Breast epithelium (tissue), 4 donors: ENCODE measurements at regions of chr5 and their contacts with region 1.

Region 1: DNA sequence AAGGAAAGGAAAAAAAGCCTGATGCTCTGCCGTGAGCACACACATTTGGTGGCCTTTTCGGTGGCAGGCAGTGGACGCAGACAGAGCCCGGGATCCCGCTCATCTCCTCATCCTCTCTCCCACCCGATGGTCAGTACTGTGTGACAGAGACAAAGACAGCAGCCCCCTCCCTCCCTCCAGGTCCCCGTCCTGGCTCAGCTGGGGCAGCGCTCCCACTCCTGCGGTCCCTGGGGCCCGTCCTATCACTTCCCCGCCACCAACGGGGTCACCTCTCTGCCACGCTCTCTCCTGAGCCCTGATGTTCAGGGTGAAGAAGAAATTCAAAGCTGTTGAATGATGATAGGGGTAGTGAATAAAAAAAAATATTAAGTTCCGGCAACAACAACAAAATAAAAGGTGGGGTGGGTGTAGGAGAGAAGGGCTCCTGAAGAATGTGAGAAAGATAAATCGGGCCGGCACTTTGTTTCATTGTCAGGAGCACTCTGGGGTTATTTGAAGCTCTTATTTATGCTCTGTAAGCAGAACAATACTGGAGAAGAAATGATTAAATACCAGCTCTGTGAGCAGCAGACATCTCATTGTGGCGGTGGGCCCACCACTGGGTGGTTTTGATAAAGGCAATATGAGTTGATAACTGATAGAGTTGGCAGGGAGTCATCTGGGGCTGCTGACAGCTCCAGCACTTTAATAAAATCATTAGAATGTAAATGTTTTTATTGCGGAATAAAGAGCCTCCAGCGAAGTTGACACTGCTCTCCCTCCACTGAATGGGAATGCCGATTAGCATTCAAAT is 417.7 kb downstream of the IRX1 start:
- DNase-seq: no peak
- H3K4me3 ChIP-seq: no peak overlapping the region
- H3K27ac ChIP-seq: no peak overlapping the region
- H3K4me1 ChIP-seq: no peaks in the 10 kb centered on the region
- H3K27me3 ChIP-seq: no peaks in the 10 kb centered on the region
- CTCF ChIP-seq: no peak
- POLR2A ChIP-seq: no peak

Region 2: DNA sequence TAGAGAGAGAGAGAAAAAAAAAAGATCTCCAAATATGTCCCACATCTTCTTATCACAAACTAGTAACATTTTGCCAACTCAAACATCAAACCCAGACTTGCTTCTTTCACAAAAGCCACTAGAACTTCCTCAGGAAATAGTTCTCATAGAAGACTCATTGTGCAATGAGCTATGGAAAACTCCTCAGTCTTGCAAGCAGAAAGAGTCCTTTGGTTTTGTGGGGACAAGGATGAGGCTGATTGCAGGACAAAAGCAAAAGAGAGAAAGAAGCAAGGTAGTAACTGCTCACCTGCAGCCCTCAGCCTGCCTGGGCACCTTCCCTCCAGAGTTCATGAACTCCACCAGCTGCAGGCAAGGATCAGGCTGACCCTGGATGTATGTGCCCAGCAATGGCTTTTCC is 18.7 kb before region 1 on chr5:
- intact Hi-C with region 1: no loop called
- DNase-seq: no peak
- H3K4me3 ChIP-seq: no peak overlapping the region
- H3K27ac ChIP-seq: no peak overlapping the region
- H3K4me1 ChIP-seq: no peaks in the 10 kb centered on the region
- H3K27me3 ChIP-seq: no peaks in the 10 kb centered on the region
- CTCF ChIP-seq: no peak
- POLR2A ChIP-seq: no peak

Region 3: DNA sequence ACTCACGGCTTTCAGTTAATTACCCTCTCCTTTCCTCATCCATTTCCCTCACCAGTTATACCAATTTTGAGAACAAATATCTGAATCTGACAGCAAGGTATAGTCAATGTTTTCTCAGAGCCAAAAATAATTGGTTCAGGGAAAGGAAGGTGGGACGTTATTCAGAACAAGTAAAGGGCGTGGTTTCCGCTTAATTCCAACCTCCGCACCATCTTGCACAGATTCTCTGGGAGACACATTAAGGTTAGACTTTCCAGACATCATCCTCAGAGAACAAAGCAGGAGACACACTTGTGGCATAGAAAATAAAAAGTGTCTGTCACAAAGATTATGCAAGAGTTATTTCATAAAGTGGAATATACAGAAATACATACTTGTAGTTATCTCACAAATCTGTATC is 23.6 kb after region 1 on chr5:
- intact Hi-C with region 1: no loop called
- DNase-seq: no peak
- H3K4me3 ChIP-seq: no peak overlapping the region
- H3K27ac ChIP-seq: no peak overlapping the region
- H3K4me1 ChIP-seq: no peaks in the 10 kb centered on the region
- H3K27me3 ChIP-seq: no peaks in the 10 kb centered on the region
- CTCF ChIP-seq: no peak
- POLR2A ChIP-seq: no peak

Region 4: DNA sequence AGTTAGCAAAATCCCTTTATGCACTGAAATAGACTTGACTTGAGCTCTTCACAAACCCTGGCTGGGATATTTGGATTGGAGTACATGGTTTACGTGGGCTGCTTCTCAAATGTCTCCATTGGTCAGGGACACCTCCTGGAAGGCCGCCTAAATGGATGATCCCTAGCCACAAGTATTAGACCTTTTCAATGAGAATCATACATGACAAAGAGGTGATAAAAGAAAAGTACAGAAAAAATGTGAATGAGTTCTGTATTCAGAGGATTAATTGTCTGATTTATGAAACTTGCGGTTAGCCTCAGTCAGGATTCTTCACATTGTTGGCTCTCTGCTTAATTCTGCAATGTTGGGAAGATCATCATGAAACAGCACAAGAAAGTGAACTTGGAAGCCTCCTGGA is 374.0 kb after region 1 on chr5:
- intact Hi-C with region 1: no loop called
- DNase-seq: peak in 1 of 2 donors; percentile 90
- H3K4me3 ChIP-seq: no peak overlapping the region
- H3K27ac ChIP-seq: peak overlapping the region in 1 of 2 donors; percentile 49
- H3K4me1 ChIP-seq: no peaks in the 10 kb centered on the region
- H3K27me3 ChIP-seq: no peaks in the 10 kb centered on the region
- CTCF ChIP-seq: no peak
- POLR2A ChIP-seq: no peak

Region 5: DNA sequence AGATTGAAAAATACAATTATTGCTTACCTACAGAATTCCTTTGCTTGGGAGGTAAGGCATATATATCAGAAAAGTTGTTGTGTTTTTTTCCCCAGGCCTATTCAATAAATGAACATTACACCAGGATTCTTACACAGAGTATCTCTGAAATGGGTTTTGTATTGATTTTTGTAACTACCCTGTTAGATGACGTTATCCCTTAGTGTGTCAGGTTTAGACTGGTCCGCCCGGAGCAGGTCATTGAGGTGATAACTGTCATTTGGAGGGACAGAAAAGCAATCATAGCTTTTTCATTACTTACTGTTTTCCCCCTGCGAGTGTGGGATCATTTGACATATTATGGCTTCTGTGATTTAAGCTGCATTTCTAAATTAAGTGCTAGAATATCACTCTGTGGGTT is 411.6 kb after region 1 on chr5:
- intact Hi-C with region 1: loop called (anchors 5 kb)
- DNase-seq: no peak
- H3K4me3 ChIP-seq: no peak overlapping the region
- H3K27ac ChIP-seq: no peak overlapping the region
- H3K4me1 ChIP-seq: no peaks in the 10 kb centered on the region
- H3K27me3 ChIP-seq: no peaks in the 10 kb centered on the region
- CTCF ChIP-seq: no peak
- POLR2A ChIP-seq: no peak